Right ventricle myocardium inferior (tissue), 1 donor: ENCODE measurements at regions of chr14 and their contacts with region 1.

Region 1: DNA sequence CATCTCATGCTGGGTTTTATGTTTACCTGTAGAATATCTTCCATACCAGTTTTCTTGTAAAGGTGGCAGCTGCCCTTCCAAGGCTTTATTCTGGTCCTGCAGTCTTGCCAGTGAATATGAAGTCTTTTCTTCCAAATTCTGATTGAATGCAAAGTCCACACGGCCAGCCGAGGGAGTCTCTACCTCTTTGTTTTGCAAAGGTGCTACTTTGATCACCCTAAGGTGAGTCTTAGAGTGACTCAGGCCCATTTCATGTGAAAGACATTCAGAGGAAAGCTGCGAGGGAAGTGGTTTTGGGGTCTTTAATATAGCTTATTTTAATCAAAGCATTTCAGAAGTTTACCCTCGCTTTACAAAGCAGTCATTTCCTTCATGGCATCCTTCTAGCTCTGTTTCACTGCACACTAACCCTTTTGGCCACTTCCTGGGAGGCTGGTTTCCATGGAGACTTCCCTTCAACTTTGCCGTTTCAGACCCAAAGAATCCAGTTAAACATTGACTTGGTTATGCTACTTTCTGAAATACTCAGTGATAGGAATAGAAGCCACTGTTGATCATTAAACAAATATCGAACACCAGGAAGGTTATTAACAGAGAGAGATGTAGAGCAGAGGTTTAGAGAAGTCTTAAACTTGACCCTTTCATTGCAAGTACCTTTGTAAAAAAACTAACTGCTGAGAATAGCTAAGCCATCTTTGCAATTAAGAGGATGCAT is at the start of gene CCDC198:
- DNase-seq: no peak
- ATAC-seq: no peak
- total RNA-seq, gene CCDC198: not detected

Region 2: DNA sequence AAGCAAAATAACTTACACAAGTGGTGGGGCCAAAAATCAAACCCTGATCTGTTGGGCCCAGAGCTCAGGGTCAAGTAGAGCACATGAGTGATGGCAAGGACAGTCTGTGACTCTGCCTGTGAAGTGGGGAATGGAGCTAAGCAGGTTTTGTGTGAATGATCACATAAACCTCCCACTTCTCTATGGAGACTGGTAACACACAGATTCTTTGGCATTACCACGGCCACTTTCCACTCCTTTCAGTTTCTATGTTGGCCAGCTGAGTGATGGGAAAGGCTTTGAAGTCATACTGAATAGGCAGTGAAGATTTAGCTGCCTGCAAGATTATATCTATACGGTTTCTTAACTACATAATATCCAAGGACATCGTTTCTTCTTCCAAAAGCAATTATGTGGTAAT is 560.5 kb after region 1 on chr14:
- intact Hi-C with region 1: loop called (anchors 5 kb)
- DNase-seq: no peak
- ATAC-seq: no peak